ENCODE measurements at regions of chr12 and their contacts with region 1.

Region 1: GRCh38 chr12:49967042-49967776 is 5.5 kb downstream of the AQP5 start:
- DNase-seq: peak; percentile 93
- ATAC-seq: peak; percentile 90
- H3K4me3 Mint-ChIP-seq: peak overlapping the region; percentile 47
- H3K27ac Mint-ChIP-seq: no peak overlapping the region
- H3K4me1 Mint-ChIP-seq: peaks cover 7% of the 10 kb centered on the region
- H3K27me3 Mint-ChIP-seq: peaks cover 41% of the 10 kb centered on the region

Region 2: GRCh38 chr12:49866859-49867579 is 100.2 kb before region 1 on chr12:
- CTCF ChIA-PET with region 1: interaction called, 20 read pairs
- DNase-seq: peak; percentile 81
- ATAC-seq: peak; percentile 85
- H3K4me3 Mint-ChIP-seq: no peak overlapping the region
- H3K27ac Mint-ChIP-seq: no peak overlapping the region
- H3K4me1 Mint-ChIP-seq: no peaks in the 10 kb centered on the region
- H3K27me3 Mint-ChIP-seq: peaks cover 9% of the 10 kb centered on the region

Region 3: DNA sequence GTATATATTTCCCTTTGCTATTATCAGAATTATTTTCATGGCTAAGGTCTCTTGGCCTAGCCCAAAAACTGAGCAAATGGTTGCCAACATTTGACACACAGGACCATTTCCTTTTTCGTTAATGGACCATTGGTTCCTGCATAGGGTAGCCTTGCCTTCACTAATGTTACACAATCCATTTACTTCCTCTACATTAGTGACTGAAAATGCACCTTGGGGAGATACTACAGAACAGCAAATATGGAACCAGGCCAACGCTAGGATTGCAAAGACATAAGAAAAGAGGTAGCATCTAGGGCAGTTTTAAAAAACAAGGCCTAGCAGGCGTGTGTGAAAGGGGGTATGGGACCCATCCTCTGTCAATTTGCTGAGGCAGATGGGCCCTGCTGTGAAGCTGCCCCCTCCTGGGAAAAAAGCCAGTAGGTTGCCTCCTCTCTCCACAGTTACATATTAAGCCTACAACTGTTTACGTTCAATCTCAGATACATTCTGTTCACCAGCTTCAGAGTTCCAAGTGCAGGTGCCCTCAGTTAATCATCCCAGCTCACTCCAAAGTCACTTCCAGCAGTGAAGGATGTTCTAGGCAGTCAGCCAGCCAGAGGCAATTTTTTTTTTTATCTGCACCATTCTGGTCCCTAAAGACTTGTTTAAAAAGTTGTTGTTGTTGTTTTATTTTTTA is 20.6 kb after region 1 on chr12:
- CTCF ChIA-PET with region 1: interaction called, 140 read pairs
- DNase-seq: no peak
- ATAC-seq: no peak
- H3K4me3 Mint-ChIP-seq: no peak overlapping the region
- H3K27ac Mint-ChIP-seq: no peak overlapping the region
- H3K4me1 Mint-ChIP-seq: no peaks in the 10 kb centered on the region
- H3K27me3 Mint-ChIP-seq: no peaks in the 10 kb centered on the region

Region 4: DNA sequence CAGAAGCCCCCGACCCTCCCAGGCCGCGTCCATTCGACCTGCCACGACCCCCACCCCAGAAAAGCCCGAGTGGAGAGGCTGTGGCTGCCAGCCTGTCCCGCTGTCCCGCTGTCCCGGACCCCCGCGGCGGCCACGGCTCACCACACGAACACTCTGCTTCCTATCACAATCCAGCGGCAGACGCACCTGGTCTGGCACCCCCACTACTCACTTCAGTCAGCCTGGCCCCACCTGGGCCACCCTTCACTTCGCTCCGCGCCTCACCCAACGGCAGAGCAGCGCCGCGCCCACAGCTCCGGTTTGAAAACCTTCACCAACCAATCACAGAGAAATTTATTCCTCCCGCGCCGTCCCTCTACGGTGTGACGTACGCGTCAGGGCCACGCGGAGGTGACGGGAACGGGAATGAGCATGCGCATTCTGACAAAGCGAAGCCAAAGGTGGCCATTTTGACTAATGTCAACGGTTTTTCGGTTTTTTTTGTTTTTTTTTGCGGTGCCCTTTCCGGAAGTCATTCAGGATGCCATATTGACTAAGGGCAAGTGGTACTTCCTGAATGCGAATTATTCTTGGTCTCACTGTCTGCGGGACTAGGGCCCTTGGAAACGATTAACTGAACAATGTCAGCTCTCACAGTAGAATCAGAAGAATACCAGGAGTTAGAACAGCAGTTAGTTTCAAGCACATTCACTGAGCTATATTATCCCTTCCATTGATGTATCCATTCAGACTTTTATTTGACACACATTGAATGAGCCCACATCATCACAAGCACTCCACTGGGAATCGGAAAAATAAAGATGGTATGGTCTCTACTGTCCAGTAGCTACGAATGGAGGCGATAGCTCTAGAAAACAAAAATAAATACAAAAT is 58.2 kb after region 1 on chr12 and contains the start of gene RACGAP1:
- CTCF ChIA-PET with region 1: interaction called, 18 read pairs
- DNase-seq: peak; percentile 99
- ATAC-seq: peak; percentile 98
- H3K4me3 Mint-ChIP-seq: peak within 1 kb of the TSS; percentile 91
- H3K27ac Mint-ChIP-seq: peak within 1 kb of the TSS; percentile 96
- H3K4me1 Mint-ChIP-seq: peaks cover 38% of the 10 kb centered on the region
- H3K27me3 Mint-ChIP-seq: no peaks in the 10 kb centered on the region
- total RNA-seq, gene RACGAP1: 180 to 198 TPM

Region 5: GRCh38 chr12:50050410-50051098 is 83.3 kb after region 1 on chr12:
- CTCF ChIA-PET with region 1: interaction called, 75 read pairs
- DNase-seq: no peak
- ATAC-seq: no peak
- H3K4me3 Mint-ChIP-seq: no peak overlapping the region
- H3K27ac Mint-ChIP-seq: no peak overlapping the region
- H3K4me1 Mint-ChIP-seq: peaks cover 2% of the 10 kb centered on the region
- H3K27me3 Mint-ChIP-seq: peaks cover 47% of the 10 kb centered on the region

Region 6: GRCh38 chr12:50074936-50075807 is 108.0 kb after region 1 on chr12:
- CTCF ChIA-PET with region 1: interaction called, 119 read pairs
- DNase-seq: peak; percentile 86
- ATAC-seq: peak; percentile 95
- H3K4me3 Mint-ChIP-seq: no peak overlapping the region
- H3K27ac Mint-ChIP-seq: peak overlapping the region; percentile 42
- H3K4me1 Mint-ChIP-seq: peaks cover 10% of the 10 kb centered on the region
- H3K27me3 Mint-ChIP-seq: no peaks in the 10 kb centered on the region

Measured in activated CD8-positive, alpha-beta memory T cell treated with anti-CD3 and anti-CD28 coated beads, Interleukin-2, amount 10 ng/mL, durations not matched to agents 7 days and 5 days (primary cell).